Heart left ventricle (tissue), 16 donors: ENCODE measurements at regions of chr18 and their contacts with region 1.

Region 1: DNA sequence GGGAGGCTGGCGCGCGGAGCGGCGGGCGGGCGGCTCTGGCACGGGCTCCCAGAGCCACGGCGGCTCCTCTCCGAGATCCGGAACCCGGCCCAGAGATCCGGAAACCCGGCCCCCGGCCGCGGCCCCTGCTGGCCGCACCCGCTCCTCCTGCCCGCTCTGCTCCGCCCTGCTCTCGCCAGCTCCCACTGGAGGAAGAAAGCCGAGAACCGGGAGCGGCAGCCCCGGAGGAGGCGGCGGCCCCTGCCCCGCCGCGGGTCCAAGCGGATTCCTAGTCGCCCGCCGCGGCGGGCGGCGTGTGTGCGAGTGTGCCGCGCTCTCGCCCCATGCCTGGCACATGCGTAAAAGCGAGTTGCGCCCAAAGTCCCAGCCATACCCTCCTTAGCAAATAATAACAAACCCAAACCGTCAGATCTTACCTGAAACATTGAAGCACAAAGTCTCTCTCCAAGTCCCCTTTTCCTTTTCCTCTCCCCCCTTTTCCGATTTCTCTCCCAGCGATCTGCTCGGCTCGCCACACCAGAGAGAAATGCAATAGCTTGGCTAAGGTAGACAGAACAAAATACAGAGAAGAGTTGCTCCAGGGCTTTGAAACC is 108.7 kb upstream of the KCTD1 start:
- DNase-seq: peak; percentile 73 to 91 (median 84)
- ATAC-seq: peak; percentile 53 to 95 (median 86)
- H3K4me3 ChIP-seq: peak overlapping the region; percentile 64 to 92 (median 74)
- H3K27ac ChIP-seq: peak overlapping the region; percentile 52 to 92 (median 85)
- H3K4me1 ChIP-seq: peaks cover 0 to 27% (median 12%) of the 10 kb centered on the region in 12 donors
- H3K27me3 ChIP-seq: peaks cover 0 to 37% (median 3%) of the 10 kb centered on the region in 9 donors
- CTCF ChIP-seq: peak in 10 of 12 donors; percentile 12 to 66 (median 35)
- POLR2A ChIP-seq: peak in 1 of 2 donors; percentile 46

Region 2: GRCh38 chr18:26090130-26091046 is 566.7 kb before region 1 on chr18 and contains the start of gene SS18:
- intact Hi-C with region 1: loop called in 1 of 10 experiments (anchors 5 kb)
- DNase-seq: peak; percentile 95 to 96 (median 96)
- ATAC-seq: peak; percentile 97 to 98 (median 98)
- H3K4me3 ChIP-seq: peak within 1 kb of the TSS; percentile 63 to 99 (median 86)
- H3K27ac ChIP-seq: peak within 1 kb of the TSS; percentile 90 to 100 (median 98)
- H3K4me1 ChIP-seq: peaks cover 2 to 41% (median 20%) of the 10 kb centered on the region in 12 donors
- H3K27me3 ChIP-seq: no peaks in the 10 kb centered on the region
- CTCF ChIP-seq: peak in 2 of 12 donors; percentile 8 to 24
- POLR2A ChIP-seq: peak in 1 of 2 donors; percentile 45
- total RNA-seq, gene SS18: 27.3 to 60.5 (median 39.7) TPM

Region 3: GRCh38 chr18:26383454-26384270 is 273.4 kb before region 1 on chr18:
- intact Hi-C with region 1: loop called in 4 of 10 experiments (anchors 5 kb)
- DNase-seq: no peak
- ATAC-seq: no peak
- H3K4me3 ChIP-seq: no peak overlapping the region
- H3K27ac ChIP-seq: no peak overlapping the region
- H3K4me1 ChIP-seq: peaks cover 0 to 20% (median 9%) of the 10 kb centered on the region in 12 donors
- H3K27me3 ChIP-seq: no peaks in the 10 kb centered on the region
- CTCF ChIP-seq: peak; percentile 62 to 83 (median 75)
- POLR2A ChIP-seq: no peak

Region 4: DNA sequence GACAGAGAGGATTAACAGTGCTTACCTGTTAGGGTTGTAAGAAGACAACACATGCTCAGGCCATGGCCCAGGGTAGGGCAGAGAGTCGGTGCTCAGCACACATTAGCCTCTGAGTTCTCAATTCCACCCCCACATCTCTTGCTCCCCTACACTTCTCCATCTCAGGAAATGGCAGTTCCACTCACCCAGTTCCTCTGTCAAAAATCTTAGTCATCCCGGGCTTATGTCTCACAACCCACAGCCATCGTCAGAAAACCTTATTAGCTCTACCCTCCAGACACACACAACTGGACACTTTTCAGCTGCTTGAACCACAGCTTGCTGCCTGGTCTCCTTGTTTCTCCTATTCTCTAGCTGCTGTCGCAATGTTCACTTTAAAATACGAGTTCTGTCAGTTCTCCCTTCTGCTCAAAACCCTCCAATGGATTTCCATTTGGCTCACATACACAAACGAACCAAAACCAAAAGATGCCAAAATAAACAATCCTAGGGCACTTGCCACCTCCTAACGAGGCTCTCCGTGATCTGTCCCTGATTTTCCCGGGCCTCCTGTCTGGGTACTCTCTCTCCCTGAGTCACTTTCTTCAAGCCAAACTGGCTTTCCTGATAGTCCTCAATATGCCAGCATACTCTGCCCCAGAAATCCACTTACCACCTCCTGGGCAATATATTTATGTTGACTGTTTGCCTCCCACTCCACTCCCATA is 198.4 kb before region 1 on chr18:
- intact Hi-C with region 1: loop called in 1 of 10 experiments (anchors 5 kb)
- DNase-seq: no peak
- ATAC-seq: no peak
- H3K4me3 ChIP-seq: no peak overlapping the region
- H3K27ac ChIP-seq: no peak overlapping the region
- H3K4me1 ChIP-seq: peaks cover 0 to 33% (median 10%) of the 10 kb centered on the region in 12 donors
- H3K27me3 ChIP-seq: no peaks in the 10 kb centered on the region
- CTCF ChIP-seq: no peak
- POLR2A ChIP-seq: no peak

Region 5: GRCh38 chr18:26697186-26697884 is 40.3 kb after region 1 on chr18:
- intact Hi-C with region 1: loop called in 1 of 10 experiments (anchors 5 kb)
- DNase-seq: no peak
- ATAC-seq: peak in 1 of 4 donors; percentile 20
- H3K4me3 ChIP-seq: no peak overlapping the region
- H3K27ac ChIP-seq: no peak overlapping the region
- H3K4me1 ChIP-seq: peaks cover 0 to 10% (median 4%) of the 10 kb centered on the region in 12 donors
- H3K27me3 ChIP-seq: no peaks in the 10 kb centered on the region
- CTCF ChIP-seq: no peak
- POLR2A ChIP-seq: no peak

Region 6: GRCh38 chr18:26723981-26724380 is 66.9 kb after region 1 on chr18:
- intact Hi-C with region 1: no loop called
- DNase-seq: no peak
- ATAC-seq: no peak
- H3K4me3 ChIP-seq: no peak overlapping the region
- H3K27ac ChIP-seq: no peak overlapping the region
- H3K4me1 ChIP-seq: peaks cover 0 to 9% (median 0%) of the 10 kb centered on the region in 12 donors
- H3K27me3 ChIP-seq: no peaks in the 10 kb centered on the region
- CTCF ChIP-seq: no peak
- POLR2A ChIP-seq: no peak

Region 7: GRCh38 chr18:26771524-26771923 is 114.5 kb after region 1 on chr18:
- intact Hi-C with region 1: loop called in 1 of 10 experiments (anchors 10 kb)
- DNase-seq: no peak
- ATAC-seq: peak in 2 of 4 donors; percentile 61 to 69
- H3K4me3 ChIP-seq: no peak overlapping the region
- H3K27ac ChIP-seq: no peak overlapping the region
- H3K4me1 ChIP-seq: no peaks in the 10 kb centered on the region
- H3K27me3 ChIP-seq: peaks cover 0 to 15% (median under 1%) of the 10 kb centered on the region in 9 donors
- CTCF ChIP-seq: peak; percentile 18 to 45 (median 36)
- POLR2A ChIP-seq: no peak